SK-N-SH (cell line): ENCODE measurements at regions of chr7 and their contacts with region 1.

Region 1: DNA sequence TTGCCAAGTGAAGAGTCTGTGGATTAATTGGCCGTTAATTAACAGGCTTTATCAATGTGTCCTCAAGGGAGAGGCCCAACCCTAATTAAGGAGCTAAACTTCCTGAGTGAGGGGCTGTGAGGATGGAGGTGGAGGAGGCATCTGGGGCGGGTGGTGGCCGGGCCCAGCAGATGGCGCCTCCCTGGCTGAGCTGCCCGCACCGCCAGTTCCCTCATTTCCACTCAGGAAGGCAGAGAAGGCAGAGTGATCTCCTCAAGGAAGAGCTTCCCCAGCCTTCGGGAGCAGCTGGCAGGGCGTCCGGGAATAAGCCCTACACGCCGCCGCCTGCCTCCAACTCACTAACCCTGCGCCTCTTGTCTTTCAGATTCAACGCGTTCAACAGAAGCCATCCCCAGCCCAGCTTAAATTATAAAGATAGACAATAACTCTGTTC is 112.2 kb downstream of the CYTH3 start:
- DNase-seq: peak; percentile 96
- H3K4me3 ChIP-seq: no peak overlapping the region; a peak in 1 of 4 replicates
- H3K27ac ChIP-seq: peak overlapping the region; percentile 24 to 48; a peak in 3 of 4 replicates
- H3K4me1 ChIP-seq: peaks cover 0 to 30% of the 10 kb centered on the region in 2 experiments; a peak in 1 of 4 replicates
- H3K27me3 ChIP-seq: no peaks in the 10 kb centered on the region
- CTCF ChIP-seq: peak; percentile 92
- EP300 ChIP-seq: no peak
- RAD21 ChIP-seq: peak; percentile 82

Region 2: GRCh38 chr7:6142871-6143380 is 17.3 kb before region 1 on chr7:
- CTCF ChIA-PET with region 1: interaction called, 31 read pairs
- POLR2A ChIA-PET with region 1: no interaction called
- DNase-seq: no peak
- H3K4me3 ChIP-seq: no peak overlapping the region
- H3K27ac ChIP-seq: no peak overlapping the region
- H3K4me1 ChIP-seq: no peaks in the 10 kb centered on the region
- H3K27me3 ChIP-seq: no peaks in the 10 kb centered on the region
- CTCF ChIP-seq: no peak
- EP300 ChIP-seq: no peak
- RAD21 ChIP-seq: no peak

Region 3: GRCh38 chr7:6175645-6176044 is 15.4 kb after region 1 on chr7:
- CTCF ChIA-PET with region 1: interaction called, 17 read pairs
- POLR2A ChIA-PET with region 1: no interaction called
- DNase-seq: no peak
- H3K4me3 ChIP-seq: no peak overlapping the region
- H3K27ac ChIP-seq: no peak overlapping the region
- H3K4me1 ChIP-seq: peaks cover 7 to 18% of the 10 kb centered on the region in 2 experiments; a peak in 2 of 4 replicates
- H3K27me3 ChIP-seq: no peaks in the 10 kb centered on the region
- CTCF ChIP-seq: no peak
- EP300 ChIP-seq: no peak
- RAD21 ChIP-seq: no peak

Region 4: DNA sequence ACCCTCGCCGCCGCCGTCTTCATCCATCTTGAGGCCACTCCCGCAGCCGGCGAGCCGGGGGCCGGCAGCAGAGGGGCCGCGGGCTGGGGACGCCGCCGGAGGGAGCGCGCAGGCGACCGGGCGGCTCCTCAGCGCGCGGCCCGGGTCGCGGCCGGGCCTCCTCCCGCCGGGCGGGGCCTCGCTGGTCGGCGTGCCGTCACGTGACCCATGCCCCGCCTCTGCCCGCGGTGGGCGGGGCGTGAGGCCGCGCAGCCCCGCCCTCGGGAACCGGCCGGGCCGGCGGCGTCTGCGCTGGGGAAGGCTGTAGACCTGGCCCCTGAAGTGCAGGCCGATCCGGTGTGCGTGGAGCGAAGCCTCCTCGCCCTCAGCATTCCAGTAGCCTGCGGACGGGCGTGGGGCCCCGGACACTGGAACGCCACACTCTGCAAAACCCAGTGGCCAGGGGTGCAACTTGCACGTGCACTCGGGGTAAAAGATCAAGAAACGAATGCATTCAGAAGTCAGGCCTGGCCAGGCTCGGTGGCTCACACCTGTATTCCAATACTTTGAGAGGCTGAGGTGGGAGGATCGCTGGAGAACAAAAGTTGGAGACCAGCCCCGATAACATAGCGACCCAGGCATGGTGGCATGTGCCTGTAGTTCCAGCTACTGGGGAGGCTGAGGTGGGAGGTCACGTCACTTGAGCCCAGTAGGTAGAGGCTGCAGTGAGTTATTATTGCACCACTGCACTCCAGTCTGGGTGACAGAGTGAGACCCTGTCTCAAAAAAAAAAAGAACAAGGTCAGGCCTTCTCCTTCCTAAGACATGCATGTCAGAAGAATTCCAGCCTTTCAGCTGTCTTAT is 112.5 kb after region 1 on chr7 and contains the start of gene CYTH3:
- CTCF ChIA-PET with region 1: interaction called, 36 read pairs
- POLR2A ChIA-PET with region 1: no interaction called
- DNase-seq: peak; percentile 100
- H3K4me3 ChIP-seq: peak within 1 kb of the TSS; percentile 79 to 94
- H3K27ac ChIP-seq: peak within 1 kb of the TSS; percentile 64 to 70
- H3K4me1 ChIP-seq: peaks cover 12 to 28% of the 10 kb centered on the region in 2 experiments; a peak in 2 of 4 replicates
- H3K27me3 ChIP-seq: no peaks in the 10 kb centered on the region
- CTCF ChIP-seq: no peak
- EP300 ChIP-seq: no peak
- RAD21 ChIP-seq: peak; percentile 1; the same call in 1 of the 2 replicates
- polyA plus RNA-seq, gene CYTH3: 55.1 and 56.8 TPM in 2 replicates

Region 5: DNA sequence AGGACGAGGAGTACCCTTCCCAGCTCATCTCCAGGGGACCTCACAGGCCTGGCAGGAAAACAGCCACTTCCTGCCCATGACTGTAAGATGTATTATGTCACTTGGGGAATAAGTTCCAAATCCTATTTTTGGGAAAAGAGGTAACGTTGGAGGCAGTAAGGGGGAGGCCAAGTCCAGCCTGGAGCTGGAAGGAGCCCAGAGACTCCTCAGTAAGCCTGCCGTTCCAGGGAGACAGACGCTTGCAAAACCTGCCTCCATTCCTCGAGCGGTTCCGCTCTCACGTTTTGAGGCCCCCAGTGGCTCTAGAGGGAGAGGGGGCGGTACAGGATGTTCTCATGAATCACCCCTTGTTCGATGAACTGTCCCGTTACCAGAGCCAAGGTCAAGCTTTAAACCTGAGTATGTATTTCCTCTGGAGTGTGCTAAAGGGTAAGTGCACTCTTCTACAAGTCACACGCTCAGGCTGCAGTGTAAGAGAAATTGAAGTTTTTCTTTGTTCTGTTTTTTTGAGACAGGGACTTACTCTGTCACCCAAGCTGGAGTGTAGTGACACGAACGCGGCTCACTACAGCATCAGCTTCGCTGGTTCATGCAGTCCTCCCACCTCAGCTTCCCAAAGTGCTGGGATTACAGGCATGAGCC is 157.7 kb after region 1 on chr7:
- CTCF ChIA-PET with region 1: interaction called, 153 read pairs
- POLR2A ChIA-PET with region 1: interaction called, 3 read pairs
- DNase-seq: no peak
- H3K4me3 ChIP-seq: no peak overlapping the region
- H3K27ac ChIP-seq: peak overlapping the region in 1 of 2 experiments; percentile 54; a peak in 2 of 4 replicates
- H3K4me1 ChIP-seq: peaks cover 0 to 13% of the 10 kb centered on the region in 2 experiments; a peak in 2 of 4 replicates
- H3K27me3 ChIP-seq: no peaks in the 10 kb centered on the region
- CTCF ChIP-seq: no peak
- EP300 ChIP-seq: no peak
- RAD21 ChIP-seq: no peak

Region 6: GRCh38 chr7:6332401-6332800 is 172.2 kb after region 1 on chr7:
- CTCF ChIA-PET with region 1: interaction called, 15 read pairs
- POLR2A ChIA-PET with region 1: interaction called, 4 read pairs
- DNase-seq: no peak
- H3K4me3 ChIP-seq: no peak overlapping the region
- H3K27ac ChIP-seq: no peak overlapping the region
- H3K4me1 ChIP-seq: no peaks in the 10 kb centered on the region
- H3K27me3 ChIP-seq: no peaks in the 10 kb centered on the region
- CTCF ChIP-seq: no peak
- EP300 ChIP-seq: no peak
- RAD21 ChIP-seq: no peak